HepG2 (cell line): ENCODE measurements at regions of chr9 and their contacts with region 1.

Region 1: DNA sequence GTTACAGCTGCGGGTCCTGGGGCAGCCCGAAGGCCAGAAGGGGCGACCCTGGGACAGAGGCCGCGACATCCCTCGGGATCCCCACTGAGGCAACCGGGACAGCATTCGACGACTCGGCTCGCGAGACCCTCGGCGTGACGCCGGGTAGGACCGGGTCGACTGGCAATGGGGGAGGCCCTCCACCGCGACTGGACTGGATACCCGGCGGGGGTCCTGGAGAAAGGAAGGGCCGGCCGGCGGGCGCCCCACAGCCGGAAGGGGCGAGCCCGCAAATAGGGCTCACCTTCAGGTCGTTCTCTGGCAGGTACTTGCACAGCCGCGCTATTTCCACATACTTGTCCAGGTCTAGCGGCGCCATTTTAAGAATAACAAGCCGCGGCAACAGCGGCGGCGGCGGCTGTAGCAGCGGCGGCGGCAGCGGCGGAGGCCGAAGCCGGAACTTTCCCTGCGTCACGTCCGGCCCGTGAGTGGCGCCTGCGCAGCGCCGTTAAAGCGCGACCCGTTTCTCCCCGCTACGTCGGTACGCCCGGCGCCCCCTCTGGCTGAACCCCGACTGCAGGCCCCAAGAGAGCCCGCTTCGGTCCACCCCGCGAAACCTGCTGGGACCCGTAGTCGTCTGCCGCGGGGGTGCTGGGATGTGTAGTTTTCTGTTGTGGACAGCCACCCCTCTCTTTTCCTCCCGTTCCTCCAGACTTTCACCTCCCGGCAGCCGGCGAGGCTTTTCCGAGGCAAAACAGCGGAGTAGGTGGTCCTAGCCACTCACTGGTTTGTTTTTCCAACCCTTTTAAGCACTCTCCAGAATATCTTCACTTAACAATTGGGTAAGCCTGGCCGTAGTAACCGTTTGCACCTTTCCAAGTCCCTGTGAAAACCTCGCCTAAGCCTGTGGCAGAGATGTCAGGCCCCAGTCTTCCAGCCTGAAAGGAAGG is at the start of gene PPP6C:
- DNase-seq: peak; percentile 91
- ATAC-seq: peak; percentile 97
- H3K4me3 ChIP-seq: peak within 1 kb of the TSS; percentile 91 to 100 (median 98)
- H3K27ac ChIP-seq: peak within 1 kb of the TSS; percentile 90
- H3K4me1 ChIP-seq: peaks cover 50% of the 10 kb centered on the region
- H3K27me3 ChIP-seq: no peaks in the 10 kb centered on the region; a peak in 1 of 5 replicates
- CTCF ChIP-seq: peak; percentile 93
- EP300 ChIP-seq: no peak
- POLR2A ChIP-seq: peak; percentile 50 to 62
- RAD21 ChIP-seq: peak; percentile 31; the same call in 1 of the 2 replicates
- total RNA-seq, gene PPP6C: 20.9 and 32.7 TPM in 2 replicates

Region 2: DNA sequence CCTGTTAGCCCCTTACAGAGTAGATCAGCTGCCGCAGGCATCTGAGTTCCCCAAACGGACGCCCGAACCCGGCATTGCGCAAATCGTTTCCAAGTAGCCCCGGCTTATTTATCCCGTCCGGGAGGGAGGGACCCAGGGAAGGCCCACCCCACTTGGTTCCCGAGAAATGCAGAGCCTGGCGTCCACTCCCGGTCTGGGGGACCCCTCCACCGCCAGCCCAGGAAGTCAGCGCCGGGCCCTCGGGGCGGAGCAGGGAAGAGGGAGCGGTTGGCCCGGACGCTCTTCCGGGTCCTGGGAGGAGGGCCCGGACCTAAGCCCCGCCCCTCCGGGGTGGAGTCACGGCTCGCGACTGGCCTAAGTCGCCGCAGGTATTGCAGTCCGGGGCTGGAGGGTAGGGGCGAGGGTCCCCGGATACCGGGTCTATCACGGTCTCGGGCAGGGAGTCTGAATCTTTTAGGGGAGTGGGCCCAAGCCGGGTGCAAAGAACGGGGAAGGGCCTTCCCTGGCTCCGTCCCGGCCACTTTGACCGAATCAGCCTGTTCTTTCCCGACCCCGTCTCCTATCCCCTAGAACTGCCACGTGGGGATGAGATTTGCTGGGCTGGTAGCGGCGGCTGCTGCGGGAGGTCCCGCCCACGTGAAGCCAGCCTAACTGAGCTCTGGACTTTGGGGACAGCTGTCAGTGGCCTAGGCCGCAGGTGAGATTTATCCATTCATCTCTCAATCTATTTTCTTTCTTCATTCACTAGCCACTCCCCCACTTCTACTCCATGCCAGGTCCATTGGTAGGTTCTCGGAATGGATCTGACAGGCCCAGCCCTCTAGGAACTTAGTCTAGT is 10.8 kb after region 1 on chr9 and contains the start of gene RABEPK:
- CTCF ChIA-PET with region 1: no interaction called
- POLR2A ChIA-PET with region 1: interaction called, 29 read pairs
- in situ Hi-C with region 1: no loop called
- intact Hi-C with region 1: no loop called
- DNase-seq: peak; percentile 89
- ATAC-seq: peak; percentile 93
- H3K4me3 ChIP-seq: peak within 1 kb of the TSS; percentile 76 to 90 (median 77)
- H3K27ac ChIP-seq: peak within 1 kb of the TSS; percentile 91
- H3K4me1 ChIP-seq: peaks cover 51% of the 10 kb centered on the region
- H3K27me3 ChIP-seq: no peaks in the 10 kb centered on the region
- CTCF ChIP-seq: 0 out of 2 replicates have a peak, but pooled peaks have one; percentile 12
- EP300 ChIP-seq: no peak
- POLR2A ChIP-seq: peak; percentile 94
- RAD21 ChIP-seq: peak; percentile 45; the same call in 1 of the 2 replicates
- total RNA-seq, gene RABEPK: 90.0 and 103 TPM in 2 replicates

Region 3: DNA sequence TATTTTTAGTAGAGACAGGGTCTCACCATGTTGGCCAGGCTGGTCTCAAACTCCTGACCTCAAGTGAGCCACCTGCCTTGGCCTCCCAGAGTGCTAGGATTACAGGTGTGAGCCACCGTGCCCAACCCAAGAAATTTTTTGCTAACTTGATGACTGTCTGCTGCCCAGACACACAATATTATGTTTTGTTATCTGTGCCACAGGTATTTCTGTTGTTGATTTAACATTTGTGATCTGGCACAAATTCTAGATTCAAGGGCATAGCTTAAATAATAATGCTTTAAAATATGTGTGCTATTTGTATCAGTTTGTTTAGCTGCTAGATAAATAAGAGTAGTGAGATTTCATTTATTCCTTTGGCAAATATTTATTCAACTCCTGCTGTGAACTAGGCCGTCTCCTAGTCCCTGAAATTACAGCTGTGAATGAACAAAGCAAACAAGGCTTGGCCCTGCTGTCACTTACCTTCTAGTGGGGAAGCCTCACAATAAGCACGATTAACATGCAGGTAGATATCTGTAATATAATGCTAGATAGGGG is 107.3 kb after region 1 on chr9:
- CTCF ChIA-PET with region 1: no interaction called
- POLR2A ChIA-PET with region 1: no interaction called
- in situ Hi-C with region 1: no loop called
- intact Hi-C with region 1: no loop called
- DNase-seq: peak; percentile 95
- ATAC-seq: peak; percentile 98
- H3K4me3 ChIP-seq: peak overlapping the region in 1 of 3 experiments; percentile 7; a peak in 1 of 6 replicates
- H3K27ac ChIP-seq: peak overlapping the region; percentile 57
- H3K4me1 ChIP-seq: peaks cover 33% of the 10 kb centered on the region
- H3K27me3 ChIP-seq: no peaks in the 10 kb centered on the region
- CTCF ChIP-seq: no peak
- EP300 ChIP-seq: peak; percentile 85
- POLR2A ChIP-seq: no peak
- RAD21 ChIP-seq: no peak

Region 4: GRCh38 chr9:125446581-125447094 is 257.0 kb after region 1 on chr9:
- CTCF ChIA-PET with region 1: no interaction called
- POLR2A ChIA-PET with region 1: no interaction called
- in situ Hi-C with region 1: no loop called
- intact Hi-C with region 1: no loop called
- DNase-seq: no peak
- ATAC-seq: no peak
- H3K4me3 ChIP-seq: no peak overlapping the region
- H3K27ac ChIP-seq: no peak overlapping the region
- H3K4me1 ChIP-seq: no peaks in the 10 kb centered on the region
- H3K27me3 ChIP-seq: no peaks in the 10 kb centered on the region
- CTCF ChIP-seq: no peak
- EP300 ChIP-seq: no peak
- POLR2A ChIP-seq: no peak
- RAD21 ChIP-seq: no peak